ENCODE measurements at regions of chr3 and their contacts with region 1.

Region 1: DNA sequence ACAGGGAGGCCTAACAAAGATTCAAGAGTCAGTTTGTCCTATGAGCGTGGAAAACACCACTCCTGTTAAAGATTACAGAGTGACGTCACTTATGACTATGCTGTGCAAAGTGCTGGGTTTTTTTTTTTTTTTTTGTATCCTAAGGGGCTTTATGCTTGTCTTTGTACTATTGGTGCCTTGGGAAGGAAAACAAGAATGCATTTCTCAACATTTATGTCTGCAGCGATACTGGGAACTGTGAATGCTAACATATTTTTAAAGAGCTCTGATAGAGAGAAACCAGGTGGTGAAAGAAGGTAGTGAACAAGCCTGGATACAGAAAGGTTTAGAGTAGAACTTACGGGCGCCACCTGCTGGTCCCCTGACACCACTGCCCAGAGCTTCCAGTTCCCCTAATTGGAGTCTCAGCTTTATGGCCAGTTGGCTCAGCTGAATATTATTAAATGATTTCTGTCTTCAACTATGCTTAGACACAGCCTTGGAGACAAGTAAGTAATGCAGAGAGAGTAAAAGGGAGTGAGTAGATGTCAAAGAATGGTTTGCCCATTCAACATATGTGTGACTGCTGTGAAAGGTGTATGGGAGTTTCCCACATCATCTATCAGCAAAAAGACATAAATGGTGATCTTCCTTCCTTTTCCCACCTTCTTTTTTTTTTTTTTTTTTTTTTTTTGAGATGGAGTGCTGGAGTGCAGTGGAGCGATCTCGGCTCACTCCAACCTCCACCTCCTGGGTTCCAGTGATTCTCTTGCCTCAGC is 807.9 kb upstream of the CFAP20DC start:
- DNase-seq: peak; percentile 50 to 84 (median 77)
- ATAC-seq: peak; percentile 93
- H3K4me3 ChIP-seq: no peak overlapping the region
- H3K4me3 Mint-ChIP-seq: peak overlapping the region; percentile 42
- H3K27ac ChIP-seq: no peak overlapping the region
- H3K27ac Mint-ChIP-seq: no peak overlapping the region
- H3K4me1 ChIP-seq: peaks cover 4% of the 10 kb centered on the region
- H3K4me1 Mint-ChIP-seq: peaks cover 9% of the 10 kb centered on the region
- H3K27me3 ChIP-seq: no peaks in the 10 kb centered on the region
- H3K27me3 Mint-ChIP-seq: no peaks in the 10 kb centered on the region
- CTCF ChIP-seq: peak; percentile 94

Region 2: DNA sequence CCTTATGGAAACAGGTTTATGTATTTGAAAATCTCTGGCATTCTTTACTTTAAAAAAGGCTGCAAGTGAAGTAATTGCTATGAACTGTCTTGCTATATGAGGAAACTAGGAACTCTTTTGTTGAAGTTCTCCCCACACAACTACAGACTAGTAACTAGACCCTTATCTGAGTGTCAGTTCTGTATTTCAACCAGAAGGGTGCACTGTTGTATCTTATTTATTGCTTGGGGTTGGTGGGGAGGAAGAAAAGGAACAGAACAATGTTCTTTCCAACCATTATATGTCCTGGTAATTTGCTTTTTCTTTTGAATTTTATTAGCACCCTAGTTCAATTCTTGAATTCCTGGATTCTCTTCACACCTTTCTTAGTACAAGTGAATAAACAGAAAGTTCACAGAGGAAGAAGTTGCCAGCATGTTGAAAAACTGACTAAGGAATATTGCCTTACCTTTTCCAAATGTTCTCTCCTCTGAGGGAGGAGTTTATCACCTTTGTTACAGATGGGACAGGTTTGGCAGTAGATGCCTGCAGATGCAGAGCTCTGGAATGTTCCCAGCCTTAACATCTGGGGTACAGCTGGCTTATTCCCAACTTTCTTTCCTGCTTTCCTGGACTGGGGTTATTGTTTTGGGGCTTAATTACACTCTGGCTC is 645.5 kb before region 1 on chr3:
- CTCF ChIA-PET with region 1: interaction called, 21 read pairs
- POLR2A ChIA-PET with region 1: interaction called, 3 read pairs
- intact Hi-C with region 1: loop called (anchors 1 kb)
- DNase-seq: peak in 2 of 9 experiments; percentile 49 to 62
- ATAC-seq: no peak
- H3K4me3 ChIP-seq: no peak overlapping the region
- H3K4me3 Mint-ChIP-seq: no peak overlapping the region
- H3K27ac ChIP-seq: no peak overlapping the region
- H3K27ac Mint-ChIP-seq: no peak overlapping the region
- H3K4me1 ChIP-seq: no peaks in the 10 kb centered on the region
- H3K4me1 Mint-ChIP-seq: peaks cover 3% of the 10 kb centered on the region
- H3K27me3 ChIP-seq: no peaks in the 10 kb centered on the region
- H3K27me3 Mint-ChIP-seq: no peaks in the 10 kb centered on the region
- CTCF ChIP-seq: peak; percentile 79

Region 3: GRCh38 chr3:59313365-59313764 is 544.4 kb before region 1 on chr3:
- CTCF ChIA-PET with region 1: interaction called, 4 read pairs
- POLR2A ChIA-PET with region 1: no interaction called
- intact Hi-C with region 1: loop called in 1 of 2 experiments (anchors 1 kb)
- DNase-seq: peak in 7 of 9 experiments; percentile 5 to 52 (median 25)
- ATAC-seq: no peak
- H3K4me3 ChIP-seq: no peak overlapping the region
- H3K4me3 Mint-ChIP-seq: no peak overlapping the region
- H3K27ac ChIP-seq: no peak overlapping the region
- H3K27ac Mint-ChIP-seq: no peak overlapping the region
- H3K4me1 ChIP-seq: no peaks in the 10 kb centered on the region
- H3K4me1 Mint-ChIP-seq: peaks cover 3% of the 10 kb centered on the region
- H3K27me3 ChIP-seq: no peaks in the 10 kb centered on the region
- H3K27me3 Mint-ChIP-seq: no peaks in the 10 kb centered on the region
- CTCF ChIP-seq: peak; percentile 38

Region 4: GRCh38 chr3:59698091-59698490 is 159.7 kb before region 1 on chr3:
- CTCF ChIA-PET with region 1: no interaction called
- POLR2A ChIA-PET with region 1: no interaction called
- intact Hi-C with region 1: no loop called
- DNase-seq: no peak
- ATAC-seq: no peak
- H3K4me3 ChIP-seq: no peak overlapping the region
- H3K4me3 Mint-ChIP-seq: no peak overlapping the region
- H3K27ac ChIP-seq: no peak overlapping the region
- H3K27ac Mint-ChIP-seq: no peak overlapping the region
- H3K4me1 ChIP-seq: no peaks in the 10 kb centered on the region
- H3K4me1 Mint-ChIP-seq: no peaks in the 10 kb centered on the region
- H3K27me3 ChIP-seq: no peaks in the 10 kb centered on the region
- H3K27me3 Mint-ChIP-seq: no peaks in the 10 kb centered on the region
- CTCF ChIP-seq: no peak

Region 5: DNA sequence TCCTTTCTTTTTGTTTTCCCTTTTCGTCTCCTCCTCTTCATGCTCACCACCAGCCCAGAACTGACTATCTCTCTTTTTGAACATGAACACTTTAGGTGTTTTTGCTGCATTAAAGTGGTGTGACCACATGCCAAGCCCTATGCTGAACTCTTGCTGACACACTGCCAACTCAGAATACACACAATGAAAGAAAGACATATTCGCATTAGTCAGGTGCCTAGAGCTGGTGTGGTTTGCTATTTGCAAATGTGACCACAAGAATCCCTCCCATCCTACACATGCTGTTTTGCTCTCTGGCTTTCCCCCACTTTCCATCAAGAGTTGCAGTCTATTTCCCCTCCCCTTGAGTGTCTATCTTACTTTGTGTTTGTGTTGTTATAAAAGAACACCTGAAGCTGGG is 159.9 kb after region 1 on chr3:
- CTCF ChIA-PET with region 1: interaction called, 3 read pairs
- POLR2A ChIA-PET with region 1: no interaction called
- intact Hi-C with region 1: loop called in 1 of 2 experiments (anchors 2 kb)
- DNase-seq: peak; percentile 7 to 85 (median 48)
- ATAC-seq: peak; percentile 88
- H3K4me3 ChIP-seq: no peak overlapping the region
- H3K4me3 Mint-ChIP-seq: peak overlapping the region; percentile 9
- H3K27ac ChIP-seq: peak overlapping the region in 1 of 2 experiments; percentile 60
- H3K27ac Mint-ChIP-seq: peak overlapping the region; percentile 97
- H3K4me1 ChIP-seq: peaks cover 42% of the 10 kb centered on the region
- H3K4me1 Mint-ChIP-seq: peaks cover 52% of the 10 kb centered on the region
- H3K27me3 ChIP-seq: no peaks in the 10 kb centered on the region
- H3K27me3 Mint-ChIP-seq: no peaks in the 10 kb centered on the region
- CTCF ChIP-seq: no peak

Region 6: DNA sequence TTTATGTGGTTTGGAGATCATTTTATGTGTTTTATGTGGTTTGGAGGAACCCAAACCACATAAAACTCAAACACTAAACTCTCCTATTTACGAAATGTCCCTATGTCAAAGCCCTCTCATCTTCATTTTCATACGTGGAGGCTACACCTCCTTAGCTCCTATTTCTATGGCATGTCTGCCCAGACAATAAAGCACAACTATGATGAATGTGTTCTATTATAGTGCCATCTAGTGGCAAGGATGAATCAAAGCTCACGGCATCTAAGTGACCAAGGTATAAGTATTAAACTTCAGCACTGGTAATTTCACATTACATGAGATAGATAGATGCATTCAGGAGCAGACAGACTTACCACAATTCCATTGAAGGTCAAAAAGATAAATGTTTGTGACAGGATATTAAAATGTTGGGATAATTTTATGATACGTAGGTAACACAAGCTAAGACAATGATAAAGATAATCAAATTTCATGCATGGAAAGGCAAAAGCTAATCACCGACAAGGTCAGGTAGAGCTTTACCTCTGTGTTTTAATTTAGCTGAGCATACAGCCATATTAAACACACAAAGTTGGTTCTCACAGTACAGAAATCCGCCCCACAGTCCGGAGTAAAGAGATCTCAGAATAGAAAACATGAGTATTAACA is 1524.1 kb after region 1 on chr3:
- CTCF ChIA-PET with region 1: interaction called, 3 read pairs
- POLR2A ChIA-PET with region 1: no interaction called
- intact Hi-C with region 1: loop called in 1 of 2 experiments (anchors 5 kb)
- DNase-seq: peak in 2 of 9 experiments; percentile 28 to 49
- ATAC-seq: no peak
- H3K4me3 ChIP-seq: no peak overlapping the region
- H3K4me3 Mint-ChIP-seq: no peak overlapping the region
- H3K27ac ChIP-seq: no peak overlapping the region
- H3K27ac Mint-ChIP-seq: no peak overlapping the region
- H3K4me1 ChIP-seq: no peaks in the 10 kb centered on the region
- H3K4me1 Mint-ChIP-seq: peaks cover 3% of the 10 kb centered on the region
- H3K27me3 ChIP-seq: peaks cover 0 to 2% of the 10 kb centered on the region in 2 experiments
- H3K27me3 Mint-ChIP-seq: peaks cover 13% of the 10 kb centered on the region
- CTCF ChIP-seq: peak; percentile 65

Measured in CD8-positive, alpha-beta T cell (primary cell).